Activated B cell treated with CpG ODN at 0.5 μM for 24 hours (primary cell): ENCODE measurements at regions of chr15 and their contacts with region 1.

Region 1: GRCh38 chr15:52227456-52227855 is 36.3 kb upstream of the GNB5 start:
- DNase-seq: peak; percentile 40
- ATAC-seq: peak; percentile 78
- H3K4me3 Mint-ChIP-seq: no peak overlapping the region
- H3K27ac Mint-ChIP-seq: peak overlapping the region; percentile 93
- H3K4me1 Mint-ChIP-seq: peaks cover 84% of the 10 kb centered on the region
- H3K27me3 Mint-ChIP-seq: no peaks in the 10 kb centered on the region
- CTCF ChIP-seq: no peak

Region 2: GRCh38 chr15:51737280-51738017 is 490.0 kb before region 1 on chr15 and contains the start of gene LYSMD2:
- CTCF ChIA-PET with region 1: no interaction called
- POLR2A ChIA-PET with region 1: no interaction called
- intact Hi-C with region 1: loop called (anchors 5 kb)
- DNase-seq: peak; percentile 75
- ATAC-seq: peak; percentile 49
- H3K4me3 Mint-ChIP-seq: peak within 1 kb of the TSS; percentile 90
- H3K27ac Mint-ChIP-seq: peak within 1 kb of the TSS; percentile 93
- H3K4me1 Mint-ChIP-seq: peaks cover 52% of the 10 kb centered on the region
- H3K27me3 Mint-ChIP-seq: no peaks in the 10 kb centered on the region
- CTCF ChIP-seq: no peak
- total RNA-seq, gene LYSMD2: 41.8 and 48.6 TPM in 2 replicates

Region 3: DNA sequence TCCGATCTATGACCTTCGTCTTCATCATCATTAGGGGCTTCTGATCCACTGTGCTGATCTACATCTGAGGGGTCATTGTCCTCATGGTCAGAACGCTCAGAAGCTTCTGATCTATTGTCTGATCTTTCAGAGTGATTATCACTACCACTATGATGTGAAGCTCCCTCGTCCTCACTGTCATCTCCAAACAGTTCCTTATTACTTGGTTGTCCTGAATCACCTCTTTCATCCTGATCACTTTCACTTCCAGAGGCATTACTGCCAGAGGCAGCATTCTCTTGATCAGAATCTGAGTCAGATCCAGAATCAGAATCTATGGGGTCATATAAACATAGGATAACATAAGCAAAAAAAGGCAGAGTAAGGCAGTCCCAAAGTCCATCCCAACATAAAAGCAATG is 261.3 kb before region 1 on chr15:
- CTCF ChIA-PET with region 1: no interaction called
- POLR2A ChIA-PET with region 1: no interaction called
- intact Hi-C with region 1: no loop called
- DNase-seq: no peak
- ATAC-seq: no peak
- H3K4me3 Mint-ChIP-seq: no peak overlapping the region
- H3K27ac Mint-ChIP-seq: no peak overlapping the region
- H3K4me1 Mint-ChIP-seq: peaks cover 15% of the 10 kb centered on the region
- H3K27me3 Mint-ChIP-seq: no peaks in the 10 kb centered on the region
- CTCF ChIP-seq: no peak

Region 4: GRCh38 chr15:52018693-52019387 is 208.6 kb before region 1 on chr15 and contains the start of gene MAPK6:
- CTCF ChIA-PET with region 1: no interaction called
- POLR2A ChIA-PET with region 1: interaction called, 3 read pairs
- intact Hi-C with region 1: loop called (anchors 2 kb)
- DNase-seq: peak; percentile 95
- ATAC-seq: peak; percentile 83
- H3K4me3 Mint-ChIP-seq: peak within 1 kb of the TSS; percentile 96
- H3K27ac Mint-ChIP-seq: peak within 1 kb of the TSS; percentile 98
- H3K4me1 Mint-ChIP-seq: peaks cover 37% of the 10 kb centered on the region
- H3K27me3 Mint-ChIP-seq: no peaks in the 10 kb centered on the region
- CTCF ChIP-seq: no peak
- total RNA-seq, gene MAPK6: 16.1 and 16.2 TPM in 2 replicates

Region 5: GRCh38 chr15:52154896-52155865 is 72.3 kb before region 1 on chr15:
- CTCF ChIA-PET with region 1: no interaction called
- POLR2A ChIA-PET with region 1: no interaction called
- intact Hi-C with region 1: no loop called
- DNase-seq: no peak
- ATAC-seq: no peak
- H3K4me3 Mint-ChIP-seq: no peak overlapping the region
- H3K27ac Mint-ChIP-seq: no peak overlapping the region
- H3K4me1 Mint-ChIP-seq: peaks cover 23% of the 10 kb centered on the region
- H3K27me3 Mint-ChIP-seq: no peaks in the 10 kb centered on the region
- CTCF ChIP-seq: no peak

Region 6: DNA sequence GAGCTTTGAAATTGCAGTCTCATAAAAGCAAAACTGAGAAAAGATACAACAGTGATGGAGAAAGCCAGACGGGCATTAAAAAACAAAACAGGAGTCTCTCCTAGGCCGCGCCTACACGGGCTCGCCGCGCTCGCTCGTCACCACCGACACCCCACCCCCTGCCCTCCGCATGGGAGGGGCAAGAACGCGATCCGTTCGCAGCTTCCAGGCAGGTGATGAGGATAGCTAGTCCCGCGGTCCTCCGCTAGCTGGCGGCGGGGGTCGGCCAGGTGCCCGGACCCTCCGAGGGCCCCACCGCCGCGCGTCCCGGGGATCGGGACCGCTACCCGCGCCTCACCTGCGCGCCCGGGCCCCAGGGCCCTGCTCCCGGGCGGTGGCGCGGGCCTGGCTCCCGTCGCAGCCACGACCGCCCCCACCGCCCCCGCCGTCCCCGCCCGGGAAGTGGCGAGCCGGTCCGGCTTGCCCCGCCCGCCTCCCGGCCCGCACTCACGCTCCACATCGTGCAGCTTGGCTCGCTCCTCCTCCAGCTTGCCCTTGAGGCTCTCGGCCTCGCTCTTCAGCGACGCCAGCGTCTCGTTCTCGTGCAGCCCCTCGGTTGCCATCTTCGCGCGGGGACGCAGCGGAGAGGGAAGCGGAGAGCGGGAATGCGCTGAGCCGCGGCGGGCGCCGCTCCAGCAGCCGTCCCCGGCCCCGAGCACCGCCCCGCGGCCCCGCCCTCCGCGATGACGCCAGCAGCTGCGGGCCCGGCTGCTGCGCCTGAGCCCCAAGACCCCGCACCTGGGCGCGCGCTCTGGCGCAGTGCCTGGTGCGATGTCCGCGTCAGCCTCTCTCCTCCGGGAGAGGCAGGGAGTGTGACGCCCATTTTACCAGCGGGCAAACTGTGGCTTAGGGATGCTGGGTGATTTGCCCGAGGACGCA is 47.9 kb before region 1 on chr15:
- CTCF ChIA-PET with region 1: interaction called, 16 read pairs
- POLR2A ChIA-PET with region 1: interaction called, 198 read pairs
- intact Hi-C with region 1: loop called (anchors 1 kb)
- DNase-seq: peak; percentile 95
- ATAC-seq: peak; percentile 80
- H3K4me3 Mint-ChIP-seq: peak overlapping the region; percentile 98
- H3K27ac Mint-ChIP-seq: peak overlapping the region; percentile 99
- H3K4me1 Mint-ChIP-seq: peaks cover 58% of the 10 kb centered on the region
- H3K27me3 Mint-ChIP-seq: no peaks in the 10 kb centered on the region
- CTCF ChIP-seq: no peak

Region 7: DNA sequence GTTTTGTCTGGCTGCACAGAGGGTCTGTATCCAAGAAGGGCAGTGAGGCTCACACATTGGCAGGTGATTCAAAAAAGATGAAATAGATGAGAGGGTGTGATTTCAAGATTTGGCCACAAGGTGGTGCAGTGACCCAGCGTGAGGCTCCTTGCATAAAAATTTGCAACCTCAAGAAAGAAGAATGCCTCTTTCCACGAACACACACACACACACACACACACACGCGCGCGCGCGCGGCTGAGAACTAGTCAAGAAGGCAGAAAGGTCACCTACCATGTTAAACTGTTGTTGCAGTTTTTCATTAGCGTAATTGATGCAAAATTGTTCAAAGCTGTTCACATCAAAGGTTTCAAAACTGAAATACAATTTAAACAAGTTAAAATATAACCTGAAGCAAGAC is 28.9 kb after region 1 on chr15:
- CTCF ChIA-PET with region 1: interaction called, 66 read pairs
- POLR2A ChIA-PET with region 1: interaction called, 297 read pairs
- intact Hi-C with region 1: loop called (anchors 1 kb)
- DNase-seq: peak; percentile 46
- ATAC-seq: peak; percentile 78
- H3K4me3 Mint-ChIP-seq: peak overlapping the region; percentile 60
- H3K27ac Mint-ChIP-seq: peak overlapping the region; percentile 68
- H3K4me1 Mint-ChIP-seq: peaks cover 48% of the 10 kb centered on the region
- H3K27me3 Mint-ChIP-seq: no peaks in the 10 kb centered on the region
- CTCF ChIP-seq: no peak

Region 8: DNA sequence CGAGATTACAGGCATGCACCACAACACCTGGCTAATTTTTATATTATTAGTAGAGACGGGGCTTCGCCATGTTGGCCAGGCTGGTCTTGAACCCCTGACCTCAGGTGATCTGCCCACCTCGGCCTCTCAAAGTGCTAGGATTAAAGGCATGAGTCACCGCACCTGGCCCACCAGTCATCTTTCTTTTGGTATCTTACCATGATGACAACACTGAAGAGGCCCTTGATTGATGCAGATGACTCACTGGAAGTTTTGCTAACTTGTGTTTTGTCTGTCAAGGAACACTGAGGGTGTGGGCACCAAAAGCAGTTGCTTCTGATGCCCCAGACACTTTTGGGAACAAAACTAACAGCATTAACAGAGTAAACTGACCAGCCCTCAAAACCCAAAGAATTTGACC is 212.9 kb after region 1 on chr15:
- CTCF ChIA-PET with region 1: no interaction called
- POLR2A ChIA-PET with region 1: no interaction called
- intact Hi-C with region 1: no loop called
- DNase-seq: no peak
- ATAC-seq: no peak
- H3K4me3 Mint-ChIP-seq: no peak overlapping the region
- H3K27ac Mint-ChIP-seq: no peak overlapping the region
- H3K4me1 Mint-ChIP-seq: peaks cover 31% of the 10 kb centered on the region
- H3K27me3 Mint-ChIP-seq: no peaks in the 10 kb centered on the region
- CTCF ChIP-seq: no peak

Region 9: DNA sequence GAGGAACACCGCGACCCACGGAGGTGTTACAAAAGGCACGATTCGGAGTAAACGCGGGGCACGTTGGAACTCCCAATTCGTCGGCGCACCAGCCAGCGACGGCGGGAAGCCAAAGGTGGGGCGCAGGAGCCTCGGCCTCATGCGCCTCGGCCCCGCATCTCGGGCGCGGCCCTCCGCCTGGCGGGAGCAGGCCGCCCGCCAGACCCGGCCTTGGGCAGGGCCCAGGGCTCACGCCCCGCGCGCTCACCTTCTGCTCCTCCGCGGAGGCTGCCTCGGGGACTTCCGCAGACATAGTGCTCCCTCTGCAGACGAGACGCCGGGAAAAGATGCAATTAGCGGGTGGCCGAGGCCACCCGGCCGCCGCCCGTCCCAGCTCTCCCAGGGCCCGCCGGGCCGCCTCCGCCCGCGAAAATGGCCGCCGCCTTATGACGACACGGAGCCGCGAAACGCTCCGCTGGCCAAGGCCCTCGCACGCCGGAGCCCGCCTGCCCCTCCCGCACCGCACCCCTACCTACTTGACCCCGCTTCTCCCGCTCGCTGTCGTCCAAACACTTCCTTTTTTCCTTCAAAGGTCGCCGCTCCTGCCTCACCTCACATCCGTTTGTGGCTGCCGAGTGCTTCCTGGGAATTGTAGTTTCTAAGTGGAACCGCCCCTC is 341.3 kb after region 1 on chr15 and contains the start of gene ARPP19:
- CTCF ChIA-PET with region 1: no interaction called
- POLR2A ChIA-PET with region 1: interaction called, 3 read pairs
- intact Hi-C with region 1: loop called (anchors 2 kb)
- DNase-seq: peak; percentile 82
- ATAC-seq: peak; percentile 83
- H3K4me3 Mint-ChIP-seq: peak within 1 kb of the TSS; percentile 97
- H3K27ac Mint-ChIP-seq: peak within 1 kb of the TSS; percentile 100
- H3K4me1 Mint-ChIP-seq: peaks cover 49% of the 10 kb centered on the region
- H3K27me3 Mint-ChIP-seq: no peaks in the 10 kb centered on the region
- CTCF ChIP-seq: no peak
- total RNA-seq, gene ARPP19: 145 and 153 TPM in 2 replicates